Caco-2 (cell line): ENCODE measurements at regions of chr4 and their contacts with region 1.

Region 1: GRCh38 chr4:90842960-90843359 is 715.8 kb downstream of the CCSER1 start:
- DNase-seq: peak in 1 of 2 experiments; percentile 2
- H3K4me3 ChIP-seq: no peak overlapping the region
- H3K4me3 Mint-ChIP-seq: no peak overlapping the region
- H3K27ac Mint-ChIP-seq: no peak overlapping the region
- H3K4me1 ChIP-seq: 0 out of 2 replicates have a peak, but pooled peaks cover 5% of the 10 kb centered on the region
- H3K4me1 Mint-ChIP-seq: peaks cover 7% of the 10 kb centered on the region
- H3K27me3 ChIP-seq: no peaks in the 10 kb centered on the region
- H3K27me3 Mint-ChIP-seq: no peaks in the 10 kb centered on the region
- CTCF ChIP-seq: no peak

Region 2: GRCh38 chr4:90876296-90876695 is 33.3 kb after region 1 on chr4:
- CTCF ChIA-PET with region 1: no interaction called
- POLR2A ChIA-PET with region 1: no interaction called
- intact Hi-C with region 1: no loop called
- DNase-seq: no peak
- H3K4me3 ChIP-seq: no peak overlapping the region
- H3K4me3 Mint-ChIP-seq: no peak overlapping the region
- H3K27ac Mint-ChIP-seq: no peak overlapping the region
- H3K4me1 ChIP-seq: no peaks in the 10 kb centered on the region
- H3K4me1 Mint-ChIP-seq: no peaks in the 10 kb centered on the region
- H3K27me3 ChIP-seq: no peaks in the 10 kb centered on the region
- H3K27me3 Mint-ChIP-seq: no peaks in the 10 kb centered on the region
- CTCF ChIP-seq: no peak

Region 3: GRCh38 chr4:90951027-90951426 is 108.1 kb after region 1 on chr4:
- CTCF ChIA-PET with region 1: no interaction called
- POLR2A ChIA-PET with region 1: no interaction called
- intact Hi-C with region 1: loop called (anchors 5 kb)
- DNase-seq: peak in 1 of 2 experiments; percentile 8
- H3K4me3 ChIP-seq: no peak overlapping the region
- H3K4me3 Mint-ChIP-seq: no peak overlapping the region
- H3K27ac Mint-ChIP-seq: no peak overlapping the region
- H3K4me1 ChIP-seq: peaks cover 9% of the 10 kb centered on the region; the same call in 1 of the 2 replicates
- H3K4me1 Mint-ChIP-seq: no peaks in the 10 kb centered on the region
- H3K27me3 ChIP-seq: no peaks in the 10 kb centered on the region
- H3K27me3 Mint-ChIP-seq: no peaks in the 10 kb centered on the region
- CTCF ChIP-seq: no peak